Activated naive CD4-positive, alpha-beta T cell treated with anti-CD3 and anti-CD28 coated beads, Interleukin-2, amount 10 ng/mL, durations not matched to agents 7 days and 5 days (primary cell): ENCODE measurements at regions of chr10 and their contacts with region 1.

Region 1: DNA sequence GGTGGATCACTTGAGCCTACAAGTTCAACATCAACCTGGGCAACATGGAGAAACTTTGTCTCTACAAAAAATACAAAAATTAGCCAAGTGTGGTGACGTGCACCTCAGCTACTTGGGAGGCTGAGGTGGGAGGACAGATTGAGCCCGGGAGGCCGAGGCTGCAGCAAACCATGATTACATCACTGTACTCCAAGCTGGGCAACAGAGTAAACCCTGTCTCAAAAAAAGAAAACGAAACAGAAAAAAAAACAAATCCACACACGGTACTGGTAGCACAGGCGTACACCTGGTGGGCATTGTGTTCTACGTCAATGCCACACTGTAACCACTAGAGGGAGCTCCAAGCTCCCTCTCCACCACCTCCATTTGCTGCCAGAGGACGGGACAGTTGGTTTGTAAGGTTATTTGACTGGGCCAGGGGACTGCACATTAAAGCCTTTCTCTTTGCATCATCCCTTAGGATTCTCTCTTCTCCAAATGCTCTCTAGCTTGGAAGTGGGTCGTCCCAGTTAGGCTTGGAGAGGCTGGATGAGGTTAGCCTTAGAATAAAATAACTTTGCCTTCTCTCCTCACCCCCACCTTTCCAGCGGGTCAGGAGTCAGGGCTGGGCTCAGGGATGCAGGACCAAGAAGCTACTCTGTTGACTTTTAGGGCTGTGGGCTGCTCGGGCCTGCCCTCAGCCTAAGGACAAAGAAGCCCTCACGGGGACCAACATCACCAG is 130.8 kb downstream of the SORBS1 start:
- DNase-seq: peak; percentile 54
- H3K4me3 Mint-ChIP-seq: no peak overlapping the region
- H3K27ac Mint-ChIP-seq: no peak overlapping the region
- H3K4me1 Mint-ChIP-seq: no peaks in the 10 kb centered on the region
- H3K27me3 Mint-ChIP-seq: peaks cover 15% of the 10 kb centered on the region

Region 2: DNA sequence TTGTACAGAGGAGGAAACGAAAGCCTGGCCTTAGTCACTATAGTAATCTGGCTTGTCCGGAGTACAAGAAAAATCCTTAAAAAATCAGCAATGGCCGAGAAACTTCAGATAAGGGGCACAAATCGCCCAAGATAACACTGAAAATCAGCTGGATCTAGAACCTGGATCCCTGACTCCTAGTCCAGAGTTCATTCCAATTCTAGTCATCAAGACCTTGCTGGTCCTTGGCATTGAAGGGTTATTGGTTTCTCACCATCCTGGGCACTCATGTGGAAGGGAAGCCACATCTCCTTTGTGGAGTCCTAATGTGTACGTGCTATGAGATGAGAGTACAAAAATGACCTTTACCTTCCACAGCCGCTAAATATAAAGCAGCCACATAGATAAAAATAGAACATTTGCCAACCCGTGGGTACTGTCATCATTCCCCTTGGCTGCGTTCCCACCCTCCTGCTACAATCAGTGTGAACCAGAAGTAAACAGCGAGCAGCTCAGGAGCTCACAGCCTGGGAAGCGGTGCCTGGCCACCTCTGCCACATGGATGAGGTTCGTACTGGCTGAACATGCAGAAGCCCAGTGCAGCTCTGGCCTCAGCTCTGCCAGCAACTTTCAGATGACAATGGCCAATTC is 23.6 kb before region 1 on chr10:
- CTCF ChIA-PET with region 1: interaction called, 18 read pairs
- DNase-seq: no peak
- H3K4me3 Mint-ChIP-seq: no peak overlapping the region
- H3K27ac Mint-ChIP-seq: no peak overlapping the region
- H3K4me1 Mint-ChIP-seq: no peaks in the 10 kb centered on the region
- H3K27me3 Mint-ChIP-seq: peaks cover 4% of the 10 kb centered on the region

Region 3: GRCh38 chr10:95445837-95446486 is 15.6 kb after region 1 on chr10:
- CTCF ChIA-PET with region 1: interaction called, 80 read pairs
- DNase-seq: peak; percentile 41
- H3K4me3 Mint-ChIP-seq: no peak overlapping the region
- H3K27ac Mint-ChIP-seq: no peak overlapping the region
- H3K4me1 Mint-ChIP-seq: peaks cover 9% of the 10 kb centered on the region
- H3K27me3 Mint-ChIP-seq: peaks cover 26% of the 10 kb centered on the region

Region 4: DNA sequence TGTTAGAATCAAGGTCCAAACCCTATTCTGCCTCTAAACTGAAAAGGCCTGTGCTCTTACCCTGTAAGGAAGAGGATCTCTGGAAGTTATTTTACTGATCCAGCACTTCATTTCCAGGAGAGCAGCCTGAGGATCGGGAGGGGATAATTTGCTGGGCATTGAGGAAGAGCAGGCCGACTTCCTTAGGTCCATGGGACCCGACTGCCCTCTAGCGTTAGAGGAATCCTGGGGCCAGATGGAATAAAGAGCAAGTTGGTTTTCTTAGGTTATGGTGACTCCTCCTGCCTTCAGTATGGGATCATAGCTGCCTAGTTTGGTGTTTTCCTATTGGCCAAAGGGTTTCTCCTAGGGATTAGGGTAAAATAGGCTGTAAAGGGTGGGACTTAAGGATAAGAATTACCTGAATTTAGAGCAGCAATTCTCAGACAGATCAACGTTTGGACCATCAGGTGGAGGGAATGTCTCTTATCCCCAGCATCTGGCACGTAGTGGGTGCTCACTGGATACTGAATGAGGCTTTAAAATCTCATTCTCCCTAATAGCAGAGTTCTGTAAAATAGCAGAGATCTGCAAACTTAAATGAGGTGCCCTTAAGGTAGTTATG is 170.8 kb after region 1 on chr10:
- CTCF ChIA-PET with region 1: interaction called, 86 read pairs
- DNase-seq: peak; percentile 65
- H3K4me3 Mint-ChIP-seq: no peak overlapping the region
- H3K27ac Mint-ChIP-seq: no peak overlapping the region
- H3K4me1 Mint-ChIP-seq: no peaks in the 10 kb centered on the region
- H3K27me3 Mint-ChIP-seq: peaks cover 7% of the 10 kb centered on the region